ENCODE measurements at regions of chr11 and their contacts with region 1.

Region 1: GRCh38 chr11:75896843-75897419 is 81.9 kb downstream of the UVRAG start:
- DNase-seq: no peak
- ATAC-seq: peak; percentile 48 to 85 (median 80)
- H3K4me3 ChIP-seq: no peak overlapping the region
- H3K27ac ChIP-seq: no peak overlapping the region
- H3K4me1 ChIP-seq: no peaks in the 10 kb centered on the region
- H3K27me3 ChIP-seq: no peaks in the 10 kb centered on the region
- CTCF ChIP-seq: peak; percentile 39 to 53 (median 51)

Region 2: DNA sequence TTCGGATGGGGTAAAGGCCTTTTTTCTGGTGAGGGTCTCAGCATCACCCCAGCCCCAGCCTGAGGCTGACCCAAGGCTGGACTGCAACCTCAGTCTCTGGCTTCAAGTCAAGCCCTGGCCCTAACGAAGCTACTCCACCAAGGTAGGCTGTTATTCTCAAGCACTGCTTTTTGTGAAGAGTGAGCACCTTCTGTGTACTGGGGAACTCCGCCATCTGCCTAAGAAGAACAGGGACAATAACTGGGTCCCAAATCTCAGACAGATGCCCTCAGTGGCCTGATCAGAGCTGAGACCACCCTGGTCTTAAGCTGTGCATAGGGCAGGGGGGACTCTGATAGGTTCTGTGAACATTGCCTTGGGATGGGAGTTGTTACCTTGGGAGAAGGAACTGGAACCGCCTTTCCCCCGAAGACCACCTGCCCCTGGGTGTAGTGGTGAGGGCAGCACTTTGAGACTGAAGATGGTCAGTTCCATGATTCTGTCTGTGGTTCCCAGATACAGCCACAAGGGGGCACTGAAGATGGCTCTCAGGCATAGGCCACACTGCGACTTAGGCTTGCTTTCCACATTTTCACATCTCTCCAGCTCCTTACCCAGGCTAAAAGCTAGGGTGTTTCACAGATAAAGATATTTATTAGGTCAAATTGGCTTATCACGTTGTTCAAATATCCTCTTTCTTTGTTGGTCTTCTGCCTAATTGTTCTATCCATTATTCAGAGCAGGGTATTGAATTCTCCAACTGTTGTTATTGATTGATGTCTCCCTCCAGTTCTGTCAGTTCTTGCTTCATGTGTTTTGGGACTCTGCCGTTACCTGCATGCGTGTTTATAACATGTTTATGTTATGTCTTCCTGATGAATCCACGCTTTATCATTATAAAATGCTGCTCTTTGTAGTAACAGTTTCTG is 93.8 kb before region 1 on chr11:
- intact Hi-C with region 1: no loop called
- DNase-seq: peak in 5 of 6 donors; percentile 48 to 80 (median 68)
- ATAC-seq: peak; percentile 84 to 97 (median 92)
- H3K4me3 ChIP-seq: no peak overlapping the region
- H3K27ac ChIP-seq: no peak overlapping the region
- H3K4me1 ChIP-seq: no peaks in the 10 kb centered on the region
- H3K27me3 ChIP-seq: no peaks in the 10 kb centered on the region
- CTCF ChIP-seq: peak; percentile 76 to 90 (median 88)

Region 3: GRCh38 chr11:76030286-76030685 is 133.4 kb after region 1 on chr11:
- intact Hi-C with region 1: no loop called
- DNase-seq: no peak
- ATAC-seq: no peak
- H3K4me3 ChIP-seq: no peak overlapping the region
- H3K27ac ChIP-seq: no peak overlapping the region
- H3K4me1 ChIP-seq: peaks cover 0 to 5% (median 4%) of the 10 kb centered on the region in 3 donors
- H3K27me3 ChIP-seq: no peaks in the 10 kb centered on the region
- CTCF ChIP-seq: no peak

Region 4: DNA sequence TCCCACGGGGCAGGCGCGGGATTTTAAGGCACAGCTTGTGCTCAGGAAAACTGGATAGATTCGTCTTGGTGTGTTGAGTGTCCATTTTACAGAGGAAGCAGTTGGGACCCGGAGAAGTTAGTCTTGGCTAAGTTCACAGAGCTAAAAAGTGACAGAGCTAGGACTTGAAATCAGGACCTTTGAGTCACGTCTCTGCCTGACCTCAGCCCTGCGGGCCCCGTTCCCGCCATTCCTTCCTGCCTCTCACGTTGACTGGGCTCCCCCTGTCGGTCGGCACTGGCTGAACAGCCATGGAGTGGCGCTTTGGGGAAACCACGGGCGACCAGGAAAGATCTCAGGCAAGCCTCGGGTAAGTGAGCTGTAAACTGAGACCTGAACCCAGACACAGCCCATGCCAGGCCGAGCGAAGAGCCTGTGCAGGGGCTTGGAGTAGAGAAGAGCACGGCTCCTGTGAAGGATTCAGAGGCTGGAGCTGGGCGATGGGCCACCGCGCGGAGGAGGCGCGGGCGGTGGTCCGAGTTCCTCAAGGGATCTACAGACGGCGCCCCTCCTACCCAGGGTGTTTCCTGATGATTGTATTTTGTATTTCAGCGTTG is 255.3 kb after region 1 on chr11:
- intact Hi-C with region 1: loop called in 2 of 3 experiments (anchors 5 to 10 kb)
- DNase-seq: peak; percentile 80 to 96 (median 90)
- ATAC-seq: peak; percentile 89 to 98 (median 95)
- H3K4me3 ChIP-seq: peak overlapping the region in 2 of 4 donors; percentile 16 to 39
- H3K27ac ChIP-seq: peak overlapping the region in 2 of 4 donors; percentile 30 to 40
- H3K4me1 ChIP-seq: peaks cover 0 to 14% (median 5%) of the 10 kb centered on the region in 3 donors
- H3K27me3 ChIP-seq: no peaks in the 10 kb centered on the region
- CTCF ChIP-seq: peak; percentile 75 to 91 (median 82)

Region 5: GRCh38 chr11:76159983-76160661 is 263.2 kb after region 1 on chr11:
- intact Hi-C with region 1: loop called in 2 of 3 experiments (anchors 5 to 10 kb)
- DNase-seq: peak in 5 of 6 donors; percentile 32 to 62 (median 56)
- ATAC-seq: peak; percentile 54 to 79 (median 70)
- H3K4me3 ChIP-seq: no peak overlapping the region
- H3K27ac ChIP-seq: peak overlapping the region in 1 of 4 donors; percentile 16
- H3K4me1 ChIP-seq: no peaks in the 10 kb centered on the region
- H3K27me3 ChIP-seq: no peaks in the 10 kb centered on the region
- CTCF ChIP-seq: no peak

Region 6: DNA sequence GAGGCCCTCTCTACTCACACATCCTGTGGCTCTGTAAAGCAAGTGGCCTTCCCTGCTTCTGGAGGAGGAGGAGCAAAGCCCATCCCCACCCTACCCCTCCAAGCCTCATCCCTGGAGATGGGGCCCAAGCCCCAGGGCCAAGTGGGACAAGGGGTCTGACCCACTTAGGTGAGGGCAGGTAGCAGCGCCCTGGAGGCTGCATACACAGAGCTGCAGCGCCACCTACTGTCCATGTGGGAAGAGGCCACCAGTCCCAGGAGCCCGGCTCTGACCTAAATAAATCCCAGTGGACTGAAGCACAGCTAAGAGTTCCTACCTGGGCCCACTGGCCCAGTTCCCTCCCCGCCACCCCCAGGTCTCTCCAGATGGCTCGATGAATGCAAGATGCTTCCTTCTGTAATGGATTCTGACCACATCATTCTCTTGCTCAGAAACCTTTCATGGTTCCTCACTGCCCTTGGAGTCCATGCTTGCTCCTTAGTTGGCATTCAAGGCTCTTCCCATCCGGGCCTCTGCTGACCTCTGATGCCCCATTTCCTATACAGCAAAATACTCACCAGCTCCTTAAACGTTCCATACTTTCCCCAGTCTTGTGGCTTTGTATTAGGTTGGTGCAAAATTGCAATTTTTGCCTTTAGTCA is 421.9 kb after region 1 on chr11:
- intact Hi-C with region 1: loop called in 1 of 3 experiments (anchors 5 kb)
- DNase-seq: peak; percentile 70 to 93 (median 88)
- ATAC-seq: peak; percentile 70 to 83 (median 80)
- H3K4me3 ChIP-seq: no peak overlapping the region
- H3K27ac ChIP-seq: no peak overlapping the region
- H3K4me1 ChIP-seq: no peaks in the 10 kb centered on the region
- H3K27me3 ChIP-seq: no peaks in the 10 kb centered on the region
- CTCF ChIP-seq: peak; percentile 71 to 93 (median 86)

Measured in pancreas (tissue), 10 donors.